ENCODE measurements at regions of chr22 and their contacts with region 1.

Region 1: DNA sequence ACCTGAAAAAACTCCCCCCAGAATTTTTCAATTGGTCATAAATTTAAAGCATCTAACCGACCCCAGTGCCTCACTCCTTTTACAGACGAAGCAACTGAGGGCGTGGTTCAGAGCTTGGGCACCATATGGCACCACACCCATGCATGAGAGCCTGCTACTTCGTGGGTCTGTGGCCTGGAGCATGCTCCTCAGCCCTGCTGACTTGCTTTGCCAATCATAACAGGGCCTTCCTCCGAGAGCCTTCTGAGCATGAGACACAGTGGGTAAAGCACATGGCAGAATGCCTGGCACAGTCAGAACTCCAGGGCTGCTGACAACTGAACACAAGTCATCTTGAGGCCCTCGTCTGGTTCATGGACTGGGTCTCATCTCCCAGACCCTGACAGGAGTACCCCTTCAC is 33.3 kb downstream of the HIRA start:
- DNase-seq: no peak
- ATAC-seq: no peak
- H3K4me3 ChIP-seq: no peak overlapping the region
- H3K27ac ChIP-seq: peak overlapping the region; percentile 73
- H3K4me1 ChIP-seq: peaks cover 31 to 33% of the 10 kb centered on the region in 2 experiments
- H3K27me3 ChIP-seq: no peaks in the 10 kb centered on the region
- CTCF ChIP-seq: no peak
- EP300 ChIP-seq: no peak
- POLR2A ChIP-seq: no peak
- RAD21 ChIP-seq: no peak; a peak in 1 of 4 replicates

Region 2: DNA sequence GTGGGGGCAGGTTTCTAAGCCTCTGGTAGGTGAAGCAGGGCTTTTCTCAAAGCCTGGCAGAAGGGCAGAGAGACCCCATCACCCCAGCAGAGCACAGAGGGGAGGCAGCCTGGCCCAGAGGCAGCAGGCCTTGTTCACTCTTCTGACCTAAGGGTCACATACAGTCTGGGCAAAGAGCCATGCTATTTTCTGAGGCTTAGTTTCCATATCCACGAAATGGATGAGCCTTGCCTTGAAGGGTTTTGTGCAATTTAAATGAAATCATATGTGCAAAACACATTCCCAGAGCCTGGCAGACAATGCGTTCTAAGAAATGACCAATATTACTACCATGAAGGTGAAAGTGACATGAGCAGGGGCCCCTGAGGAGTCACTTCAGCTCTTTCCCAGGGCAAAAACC is 11.2 kb before region 1 on chr22:
- CTCF ChIA-PET with region 1: no interaction called
- POLR2A ChIA-PET with region 1: interaction called, 245 read pairs
- in situ Hi-C with region 1: no loop called
- intact Hi-C with region 1: no loop called
- DNase-seq: no peak
- ATAC-seq: no peak
- H3K4me3 ChIP-seq: no peak overlapping the region
- H3K27ac ChIP-seq: no peak overlapping the region
- H3K4me1 ChIP-seq: no peaks in the 10 kb centered on the region
- H3K27me3 ChIP-seq: no peaks in the 10 kb centered on the region
- CTCF ChIP-seq: no peak
- EP300 ChIP-seq: no peak
- POLR2A ChIP-seq: no peak
- RAD21 ChIP-seq: 0 out of 4 replicates have a peak, but pooled peaks of 1 of the 2 experiments have one; percentile 3

Region 3: DNA sequence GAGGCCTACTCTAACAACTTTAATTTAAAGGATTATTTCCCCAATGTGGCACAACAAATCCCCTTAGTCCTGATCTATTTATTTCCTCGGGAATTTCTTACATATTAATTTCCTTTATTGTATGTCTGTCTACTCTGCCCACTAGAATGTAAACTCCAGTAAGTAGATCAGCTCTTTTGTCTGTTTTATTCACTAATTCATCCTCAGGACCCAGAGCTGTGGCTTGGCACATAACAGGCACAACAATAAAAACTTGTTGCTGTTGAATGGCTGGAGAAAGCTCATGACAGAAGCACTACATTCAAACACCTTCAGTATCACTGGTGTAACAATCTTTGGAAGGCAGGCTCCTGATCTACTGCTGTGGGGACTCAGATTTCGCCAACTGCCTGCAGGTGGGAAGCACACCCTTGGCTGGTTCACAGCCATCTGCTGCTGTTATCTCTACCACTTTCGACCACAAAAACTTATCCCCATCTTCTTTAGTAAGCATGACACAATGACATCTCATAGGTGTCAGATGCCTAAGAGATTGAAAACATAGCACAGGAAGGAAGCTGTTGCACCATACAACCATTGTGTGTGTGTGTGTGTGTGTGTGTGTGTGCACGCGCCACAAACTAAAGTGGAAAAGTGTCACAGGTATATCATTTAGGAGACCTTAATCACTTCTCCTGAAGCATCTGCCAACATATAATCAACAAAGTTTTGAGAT is 21.4 kb after region 1 on chr22:
- CTCF ChIA-PET with region 1: interaction called, 3 read pairs
- POLR2A ChIA-PET with region 1: interaction called, 245 read pairs
- in situ Hi-C with region 1: no loop called
- intact Hi-C with region 1: loop called (anchors 1 kb)
- DNase-seq: peak; percentile 87 to 96 (median 90)
- ATAC-seq: peak; percentile 68
- H3K4me3 ChIP-seq: no peak overlapping the region
- H3K27ac ChIP-seq: peak overlapping the region; percentile 64
- H3K4me1 ChIP-seq: peaks cover 44 to 50% of the 10 kb centered on the region in 2 experiments
- H3K27me3 ChIP-seq: no peaks in the 10 kb centered on the region
- CTCF ChIP-seq: peak in 1 of 3 experiments; percentile 19; a peak in 2 of 6 replicates
- EP300 ChIP-seq: peak; percentile 98
- POLR2A ChIP-seq: no peak
- RAD21 ChIP-seq: no peak

Region 4: DNA sequence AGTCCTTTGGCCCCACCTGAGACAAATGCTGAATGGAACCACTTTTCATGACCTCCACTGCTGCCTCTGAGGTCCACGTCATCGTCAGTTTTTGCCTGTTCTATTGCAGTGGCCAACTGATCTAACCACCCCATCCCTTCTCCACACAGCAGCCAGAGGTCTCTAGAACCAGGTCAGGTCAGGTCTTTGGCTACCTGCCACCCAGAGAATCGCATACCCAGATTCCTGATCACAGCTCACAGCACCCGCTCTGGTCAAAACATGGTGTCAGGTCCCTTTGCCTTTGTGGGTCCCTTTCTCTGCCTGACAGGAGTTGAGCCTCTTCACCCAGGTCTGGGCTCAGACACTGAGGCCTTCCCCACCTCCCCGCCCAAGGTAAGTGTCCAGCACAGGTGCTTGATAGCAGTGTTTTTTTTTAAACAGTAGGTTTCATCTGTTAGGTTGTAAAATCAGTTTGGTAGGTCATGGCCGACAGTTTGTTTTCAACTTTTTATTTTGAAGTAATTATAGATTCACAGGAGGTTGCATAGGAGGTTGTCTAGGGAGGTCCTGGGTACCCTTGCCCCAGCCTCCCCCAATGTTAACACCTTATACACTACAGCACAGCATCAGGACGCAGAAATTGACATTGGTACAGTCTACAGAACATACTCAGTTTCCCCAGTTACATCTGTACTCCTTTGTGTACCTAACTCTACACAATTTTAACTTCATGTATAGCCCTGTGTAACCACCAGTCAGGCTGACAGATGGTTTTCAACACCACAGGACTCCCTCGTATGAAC is 42.4 kb after region 1 on chr22:
- CTCF ChIA-PET with region 1: no interaction called
- POLR2A ChIA-PET with region 1: interaction called, 45 read pairs
- in situ Hi-C with region 1: no loop called
- intact Hi-C with region 1: no loop called
- DNase-seq: peak in 1 of 4 experiments; percentile 49
- ATAC-seq: peak; percentile 7
- H3K4me3 ChIP-seq: no peak overlapping the region
- H3K27ac ChIP-seq: no peak overlapping the region
- H3K4me1 ChIP-seq: peaks cover 7 to 9% of the 10 kb centered on the region in 2 experiments; a peak in 4 of 5 replicates
- H3K27me3 ChIP-seq: no peaks in the 10 kb centered on the region
- CTCF ChIP-seq: no peak
- EP300 ChIP-seq: no peak
- POLR2A ChIP-seq: peak; percentile 34; the same call in 1 of the 2 replicates
- RAD21 ChIP-seq: no peak

Measured in K562 (cell line).